IMR-90 (cell line): ENCODE measurements at regions of chr19 and their contacts with region 1.

Region 1: DNA sequence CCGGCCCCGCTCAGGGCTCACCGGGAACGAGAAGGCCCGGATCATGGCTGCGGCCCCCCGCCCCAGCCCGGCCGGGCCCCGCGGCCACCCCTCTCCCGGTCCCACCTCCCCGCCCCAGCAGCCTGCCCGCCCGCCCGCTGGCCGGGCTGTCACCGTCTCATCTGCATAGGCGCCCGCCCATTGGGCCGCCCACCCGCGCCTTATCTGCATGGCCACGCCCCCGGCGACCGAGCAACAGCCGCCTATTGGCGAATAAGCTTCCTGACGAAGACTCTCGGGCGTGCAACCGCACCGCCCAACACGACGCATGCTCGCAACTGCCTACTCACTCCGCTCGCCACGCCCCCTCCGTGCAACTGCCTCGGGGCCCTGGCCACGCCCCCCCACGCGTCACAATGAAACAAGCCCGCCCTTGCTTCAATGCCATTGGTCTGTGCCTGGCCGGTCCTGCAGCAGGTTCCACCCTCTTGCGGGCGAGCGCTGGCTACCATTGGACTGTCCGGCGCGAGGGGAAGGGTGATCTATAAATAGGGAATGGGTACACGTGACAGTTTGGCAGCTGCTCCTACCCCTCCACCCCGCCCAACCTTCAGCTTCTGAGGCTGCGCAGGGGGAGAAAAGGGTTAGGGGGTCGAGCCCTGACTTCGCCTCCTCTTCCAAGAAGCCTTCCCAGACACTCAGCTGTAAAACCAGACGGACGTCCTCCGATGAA is at the start of gene DACT3:
- DNase-seq: peak; percentile 100
- ATAC-seq: peak; percentile 94
- H3K4me3 ChIP-seq: peak within 1 kb of the TSS; percentile 64
- H3K27ac ChIP-seq: peak within 1 kb of the TSS; percentile 39
- H3K4me1 ChIP-seq: peaks cover 4% of the 10 kb centered on the region
- H3K27me3 ChIP-seq: no peaks in the 10 kb centered on the region; the same call in 1 of the 2 replicates
- CTCF ChIP-seq: no peak
- POLR2A ChIP-seq: no peak
- RAD21 ChIP-seq: no peak
- total RNA-seq, gene DACT3: 1.6 and 1.9 TPM in 2 replicates

Region 2: GRCh38 chr19:46133101-46133682 is 528.0 kb before region 1 on chr19:
- CTCF ChIA-PET with region 1: no interaction called
- POLR2A ChIA-PET with region 1: interaction called, 14 read pairs
- dilution Hi-C with region 1: no loop called
- in situ Hi-C with region 1: no loop called
- intact Hi-C with region 1: no loop called
- DNase-seq: peak; percentile 97
- ATAC-seq: peak; percentile 73
- H3K4me3 ChIP-seq: peak overlapping the region; percentile 28; the same call in 1 of the 2 replicates
- H3K27ac ChIP-seq: peak overlapping the region; percentile 92
- H3K4me1 ChIP-seq: peaks cover 14% of the 10 kb centered on the region
- H3K27me3 ChIP-seq: no peaks in the 10 kb centered on the region; the same call in 1 of the 2 replicates
- CTCF ChIP-seq: no peak
- POLR2A ChIP-seq: peak; percentile 69; the same call in 1 of the 2 replicates
- RAD21 ChIP-seq: no peak

Region 3: DNA sequence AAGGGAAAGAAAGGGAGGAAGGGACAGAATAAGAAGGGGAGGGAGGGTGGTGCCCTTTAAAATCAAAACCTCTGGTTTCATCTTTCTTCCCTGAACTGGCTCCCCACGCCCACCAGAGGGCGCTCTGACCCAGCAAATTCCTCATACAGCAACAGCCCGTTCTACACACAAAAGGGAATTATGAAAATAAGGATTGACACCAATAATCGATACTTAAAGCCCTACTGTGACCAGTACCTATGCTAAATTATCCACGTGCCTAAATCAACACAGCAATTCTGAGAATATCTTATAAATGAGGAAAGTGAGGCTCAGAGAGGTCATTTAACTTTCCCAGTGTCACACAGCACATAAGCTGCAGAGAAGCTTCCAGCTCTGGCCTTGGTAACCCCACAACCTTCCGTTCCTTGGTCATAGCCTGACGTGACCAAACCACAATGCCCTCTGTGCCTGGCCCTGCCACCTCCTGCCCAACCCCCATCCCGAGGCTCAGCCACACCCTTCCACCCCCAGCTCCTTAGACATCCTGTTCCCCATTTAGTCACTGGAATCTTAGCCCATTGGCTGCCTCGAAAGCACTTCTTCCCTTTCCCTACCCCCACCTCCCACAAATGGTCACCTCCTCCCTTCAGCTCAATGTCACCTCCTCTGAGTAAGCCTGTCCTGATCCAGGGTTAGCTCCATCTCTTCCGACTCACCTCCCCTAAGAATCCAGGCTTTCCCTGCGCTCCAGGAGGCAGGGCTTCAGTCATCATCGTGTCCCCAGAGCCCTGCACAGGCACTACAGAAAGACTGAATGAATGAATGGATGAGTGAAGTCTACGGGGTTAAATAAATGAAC is 131.3 kb before region 1 on chr19:
- CTCF ChIA-PET with region 1: no interaction called
- POLR2A ChIA-PET with region 1: no interaction called
- dilution Hi-C with region 1: no loop called
- in situ Hi-C with region 1: loop called (anchors 10 kb)
- intact Hi-C with region 1: loop called (anchors 1 kb)
- DNase-seq: peak; percentile 54
- ATAC-seq: peak; percentile 90
- H3K4me3 ChIP-seq: no peak overlapping the region
- H3K27ac ChIP-seq: no peak overlapping the region
- H3K4me1 ChIP-seq: no peaks in the 10 kb centered on the region
- H3K27me3 ChIP-seq: peaks cover 11% of the 10 kb centered on the region; the same call in 1 of the 2 replicates
- CTCF ChIP-seq: peak; percentile 94
- POLR2A ChIP-seq: no peak
- RAD21 ChIP-seq: peak; percentile 91

Region 4: DNA sequence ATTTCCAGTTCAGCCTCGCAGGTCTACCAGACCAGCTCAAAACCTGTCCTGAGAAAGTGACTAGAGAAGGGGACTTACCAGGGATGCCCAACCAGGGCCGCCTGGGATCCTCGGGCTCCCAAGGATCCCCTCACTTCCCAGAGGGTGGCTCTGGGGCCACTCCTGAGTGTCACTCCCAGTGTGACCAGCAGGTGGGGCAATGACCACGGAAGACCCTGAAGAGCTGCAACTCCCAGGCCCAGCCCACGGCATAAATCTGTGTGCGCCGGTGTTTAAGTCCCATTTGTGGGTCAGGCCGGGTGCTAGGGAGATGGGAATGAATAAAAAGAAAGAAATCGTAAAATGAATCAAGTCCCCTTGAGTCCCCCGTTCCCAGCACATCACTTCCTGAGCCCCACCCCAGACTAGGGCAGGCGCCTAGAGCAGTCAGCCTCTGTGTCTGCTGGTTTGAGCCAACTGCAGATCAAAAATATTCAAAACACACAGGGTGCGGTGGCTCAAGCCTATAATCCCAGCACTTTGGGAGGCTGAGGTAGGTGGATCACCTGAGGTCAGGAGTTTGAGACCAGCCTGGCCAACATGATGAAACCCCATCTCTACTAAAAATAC is 47.0 kb before region 1 on chr19:
- CTCF ChIA-PET with region 1: interaction called, 23 read pairs
- POLR2A ChIA-PET with region 1: no interaction called
- dilution Hi-C with region 1: no loop called
- in situ Hi-C with region 1: loop called (anchors 5 kb)
- intact Hi-C with region 1: loop called (anchors 1 kb)
- DNase-seq: peak; percentile 75
- ATAC-seq: peak; percentile 93
- H3K4me3 ChIP-seq: no peak overlapping the region
- H3K27ac ChIP-seq: no peak overlapping the region
- H3K4me1 ChIP-seq: peaks cover 8% of the 10 kb centered on the region
- H3K27me3 ChIP-seq: no peaks in the 10 kb centered on the region
- CTCF ChIP-seq: peak; percentile 87
- POLR2A ChIP-seq: no peak
- RAD21 ChIP-seq: peak; percentile 86